ENCODE measurements at regions of chr6 and their contacts with region 1.

Region 1: DNA sequence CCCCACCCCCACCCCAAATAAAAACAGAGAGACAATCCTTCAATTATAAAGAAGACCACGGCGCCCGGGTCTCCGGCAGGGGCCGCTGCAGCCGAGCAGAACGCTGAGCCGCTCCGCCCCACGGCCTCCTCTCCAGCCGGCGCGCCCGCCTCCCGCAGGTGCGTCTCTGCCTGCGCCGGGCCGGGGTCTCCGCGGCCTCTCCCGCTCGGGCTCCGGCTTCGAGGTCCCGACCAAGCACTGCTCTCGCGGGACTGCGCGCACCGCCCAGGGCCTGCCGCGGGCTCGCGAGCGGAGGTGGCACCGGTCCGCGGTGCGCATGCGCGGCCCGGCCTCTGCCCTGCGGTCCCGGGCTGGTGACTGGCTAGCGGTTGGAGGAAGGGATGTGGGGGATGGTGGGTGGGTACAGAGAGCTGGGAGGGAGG is 241 bp upstream of the SIRT5 start:
- DNase-seq: peak; percentile 91 to 96 (median 94)
- ATAC-seq: peak; percentile 89
- H3K4me3 ChIP-seq: peak overlapping the region; percentile 93
- H3K4me3 Mint-ChIP-seq: peak overlapping the region; percentile 88 to 99 (median 95)
- H3K27ac ChIP-seq: peak overlapping the region; percentile 80
- H3K27ac Mint-ChIP-seq: peak overlapping the region; percentile 88 to 99 (median 95)
- H3K4me1 ChIP-seq: peaks cover 5 to 13% of the 10 kb centered on the region in 2 donors
- H3K4me1 Mint-ChIP-seq: peaks cover 10 to 44% (median 28%) of the 10 kb centered on the region in 7 donors
- H3K27me3 ChIP-seq: no peaks in the 10 kb centered on the region
- H3K27me3 Mint-ChIP-seq: no peaks in the 10 kb centered on the region

Region 2: GRCh38 chr6:13203145-13203544 is 371.0 kb before region 1 on chr6:
- CTCF ChIA-PET with region 1: no interaction called
- POLR2A ChIA-PET with region 1: no interaction called
- intact Hi-C with region 1: no loop called
- DNase-seq: no peak
- ATAC-seq: peak; percentile 22
- H3K4me3 ChIP-seq: no peak overlapping the region
- H3K4me3 Mint-ChIP-seq: no peak overlapping the region
- H3K27ac ChIP-seq: no peak overlapping the region
- H3K27ac Mint-ChIP-seq: no peak overlapping the region
- H3K4me1 ChIP-seq: no peaks in the 10 kb centered on the region
- H3K4me1 Mint-ChIP-seq: peaks cover 0 to 2% (median 0%) of the 10 kb centered on the region in 7 donors
- H3K27me3 ChIP-seq: no peaks in the 10 kb centered on the region
- H3K27me3 Mint-ChIP-seq: peaks cover 0 to 2% (median 0%) of the 10 kb centered on the region in 5 donors

Region 3: DNA sequence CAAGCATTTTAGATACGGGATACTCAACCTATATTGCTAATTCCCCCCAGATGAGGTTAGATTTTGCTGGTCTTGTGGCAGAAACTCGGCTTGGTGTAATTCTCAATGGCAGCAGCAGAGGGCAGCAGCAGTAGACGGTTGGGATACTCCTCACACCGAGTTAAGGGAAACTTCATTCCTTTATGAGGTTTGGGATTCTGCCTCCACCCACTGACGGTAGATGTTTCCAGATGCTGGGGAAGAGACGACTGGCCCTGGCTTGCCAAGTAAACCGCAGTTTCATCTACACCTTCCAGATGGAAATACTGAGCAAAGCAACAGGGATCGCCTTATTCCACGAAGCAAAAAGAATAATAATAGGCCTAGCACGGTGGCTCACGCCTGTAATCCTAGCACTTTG is 237.6 kb before region 1 on chr6:
- CTCF ChIA-PET with region 1: interaction called, 4 read pairs
- POLR2A ChIA-PET with region 1: interaction called, 4 read pairs
- intact Hi-C with region 1: loop called (anchors 1 kb)
- DNase-seq: peak; percentile 39 to 80 (median 60)
- ATAC-seq: peak; percentile 83
- H3K4me3 ChIP-seq: no peak overlapping the region
- H3K4me3 Mint-ChIP-seq: peak overlapping the region in 1 of 10 donors; percentile 14
- H3K27ac ChIP-seq: no peak overlapping the region
- H3K27ac Mint-ChIP-seq: no peak overlapping the region
- H3K4me1 ChIP-seq: no peaks in the 10 kb centered on the region
- H3K4me1 Mint-ChIP-seq: peaks cover 3 to 42% (median 8%) of the 10 kb centered on the region in 7 donors
- H3K27me3 ChIP-seq: no peaks in the 10 kb centered on the region
- H3K27me3 Mint-ChIP-seq: peaks cover 0 to 2% (median 0%) of the 10 kb centered on the region in 5 donors

Region 4: DNA sequence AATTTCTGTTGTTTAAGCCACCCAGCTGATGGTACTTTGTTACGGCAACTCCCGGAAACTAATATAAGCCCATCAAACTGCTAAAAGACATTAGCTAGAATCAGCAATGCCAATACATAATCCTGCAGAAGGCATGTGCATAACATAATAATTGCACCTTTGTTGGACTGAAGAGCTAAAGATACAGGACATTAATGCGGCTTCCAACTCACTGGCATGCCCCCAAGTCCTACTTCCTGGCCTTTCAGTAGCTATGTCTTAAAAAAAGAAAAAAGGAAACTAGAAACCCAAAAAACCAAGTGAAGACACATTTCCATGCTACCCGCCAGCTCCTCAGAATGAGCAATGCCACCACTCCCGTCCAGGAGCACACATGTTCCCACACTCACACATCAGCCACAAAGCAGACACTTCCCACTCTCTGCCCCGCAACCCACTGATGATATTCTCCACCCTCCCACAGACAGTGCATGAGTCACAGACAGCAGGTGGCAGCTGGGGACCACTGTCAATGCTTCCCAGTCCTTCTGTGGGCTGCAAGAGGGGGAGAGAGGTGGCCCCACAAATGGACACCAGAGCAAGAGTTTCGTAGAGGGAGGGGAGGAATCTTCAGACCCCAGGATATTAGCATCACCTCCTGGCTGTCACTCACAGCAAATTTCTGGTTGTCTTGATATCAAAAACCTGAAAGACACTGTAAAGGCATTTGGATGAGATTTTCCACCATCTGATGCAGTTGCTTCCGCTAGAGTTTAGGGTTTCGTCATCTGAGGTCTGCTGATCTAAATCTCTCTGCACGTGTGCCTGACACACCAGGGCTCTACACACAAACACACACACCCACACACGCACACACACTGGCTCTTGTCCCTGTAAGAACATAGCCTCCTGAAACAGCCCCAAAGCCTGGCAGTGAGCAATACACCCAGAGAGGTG is 119.6 kb before region 1 on chr6:
- CTCF ChIA-PET with region 1: interaction called, 3 read pairs
- POLR2A ChIA-PET with region 1: interaction called, 3 read pairs
- intact Hi-C with region 1: loop called (anchors 1 to 10 kb)
- DNase-seq: peak; percentile 27 to 83 (median 59)
- ATAC-seq: peak; percentile 88
- H3K4me3 ChIP-seq: peak overlapping the region; percentile 21
- H3K4me3 Mint-ChIP-seq: peak overlapping the region; percentile 63 to 85 (median 74)
- H3K27ac ChIP-seq: peak overlapping the region; percentile 16
- H3K27ac Mint-ChIP-seq: peak overlapping the region; percentile 66 to 93 (median 84)
- H3K4me1 ChIP-seq: peaks cover 17 to 23% of the 10 kb centered on the region in 2 donors
- H3K4me1 Mint-ChIP-seq: peaks cover 15 to 58% (median 28%) of the 10 kb centered on the region in 7 donors
- H3K27me3 ChIP-seq: no peaks in the 10 kb centered on the region
- H3K27me3 Mint-ChIP-seq: no peaks in the 10 kb centered on the region

Region 5: DNA sequence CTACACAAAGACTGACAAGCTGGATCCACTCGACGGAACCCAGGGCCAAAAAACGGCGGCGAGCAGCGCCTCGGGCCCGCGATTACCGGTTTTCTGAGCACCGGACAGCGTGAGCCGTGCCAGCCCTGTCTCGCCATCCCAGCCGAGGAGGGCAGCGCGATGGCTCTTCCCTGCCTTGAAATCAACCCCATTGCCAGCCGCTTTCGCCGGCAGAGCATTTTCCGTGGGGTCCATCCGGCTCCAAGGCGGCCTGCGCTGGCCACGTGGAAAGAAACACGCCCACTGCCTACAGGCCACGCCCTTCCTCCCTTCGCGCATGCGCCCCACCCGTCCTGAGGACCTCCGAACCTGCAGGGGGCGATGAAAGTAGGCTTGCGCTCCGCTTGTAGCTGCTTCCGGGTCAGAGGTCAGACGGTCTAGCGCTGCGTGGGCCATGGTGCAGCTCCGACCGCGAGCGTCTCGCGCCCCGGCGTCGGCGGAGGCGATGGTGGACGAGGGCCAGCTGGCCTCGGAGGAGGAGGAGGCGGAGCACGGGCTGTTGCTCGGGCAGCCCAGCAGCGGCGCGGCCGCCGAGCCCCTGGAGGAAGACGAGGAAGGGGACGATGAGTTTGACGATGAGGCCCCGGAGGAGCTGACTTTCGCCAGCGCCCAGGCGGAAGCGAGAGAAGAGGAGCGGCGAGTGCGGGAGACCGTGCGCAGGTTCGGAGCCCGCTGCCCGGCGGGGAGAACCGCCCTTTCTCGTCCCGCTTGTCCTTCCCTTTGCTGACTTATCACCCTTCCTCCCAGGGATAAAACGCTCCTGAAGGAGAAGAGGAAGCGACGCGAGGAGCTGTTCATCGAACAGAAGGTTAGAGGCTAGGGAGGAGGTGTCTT is 41.0 kb after region 1 on chr6 and contains the start of gene NOL7:
- CTCF ChIA-PET with region 1: interaction called, 26 read pairs
- POLR2A ChIA-PET with region 1: interaction called, 74 read pairs
- intact Hi-C with region 1: loop called (anchors 1 kb)
- DNase-seq: peak; percentile 96 to 99 (median 98)
- ATAC-seq: peak; percentile 98
- H3K4me3 ChIP-seq: peak within 1 kb of the TSS; percentile 85
- H3K4me3 Mint-ChIP-seq: peak within 1 kb of the TSS; percentile 82 to 98 (median 94)
- H3K27ac ChIP-seq: peak within 1 kb of the TSS; percentile 81
- H3K27ac Mint-ChIP-seq: peak within 1 kb of the TSS; percentile 85 to 97 (median 94)
- H3K4me1 ChIP-seq: peaks cover 8 to 26% of the 10 kb centered on the region in 2 donors
- H3K4me1 Mint-ChIP-seq: peaks cover 25 to 55% (median 47%) of the 10 kb centered on the region in 7 donors
- H3K27me3 ChIP-seq: no peaks in the 10 kb centered on the region
- H3K27me3 Mint-ChIP-seq: peaks cover 0 to 2% (median 0%) of the 10 kb centered on the region in 5 donors
- total RNA-seq, gene NOL7: 49.1 to 65.2 (median 62.1) TPM

Region 6: GRCh38 chr6:13668291-13668928 is 94.2 kb after region 1 on chr6:
- CTCF ChIA-PET with region 1: no interaction called
- POLR2A ChIA-PET with region 1: no interaction called
- intact Hi-C with region 1: no loop called
- DNase-seq: no peak
- ATAC-seq: peak; percentile 47
- H3K4me3 ChIP-seq: no peak overlapping the region
- H3K4me3 Mint-ChIP-seq: peak overlapping the region in 7 of 10 donors; percentile 32 to 52 (median 40)
- H3K27ac ChIP-seq: no peak overlapping the region
- H3K27ac Mint-ChIP-seq: peak overlapping the region in 2 of 9 donors; percentile 20 to 75
- H3K4me1 ChIP-seq: peaks cover 23 to 44% of the 10 kb centered on the region in 2 donors
- H3K4me1 Mint-ChIP-seq: peaks cover 67 to 93% (median 90%) of the 10 kb centered on the region in 7 donors
- H3K27me3 ChIP-seq: no peaks in the 10 kb centered on the region
- H3K27me3 Mint-ChIP-seq: no peaks in the 10 kb centered on the region

Region 7: DNA sequence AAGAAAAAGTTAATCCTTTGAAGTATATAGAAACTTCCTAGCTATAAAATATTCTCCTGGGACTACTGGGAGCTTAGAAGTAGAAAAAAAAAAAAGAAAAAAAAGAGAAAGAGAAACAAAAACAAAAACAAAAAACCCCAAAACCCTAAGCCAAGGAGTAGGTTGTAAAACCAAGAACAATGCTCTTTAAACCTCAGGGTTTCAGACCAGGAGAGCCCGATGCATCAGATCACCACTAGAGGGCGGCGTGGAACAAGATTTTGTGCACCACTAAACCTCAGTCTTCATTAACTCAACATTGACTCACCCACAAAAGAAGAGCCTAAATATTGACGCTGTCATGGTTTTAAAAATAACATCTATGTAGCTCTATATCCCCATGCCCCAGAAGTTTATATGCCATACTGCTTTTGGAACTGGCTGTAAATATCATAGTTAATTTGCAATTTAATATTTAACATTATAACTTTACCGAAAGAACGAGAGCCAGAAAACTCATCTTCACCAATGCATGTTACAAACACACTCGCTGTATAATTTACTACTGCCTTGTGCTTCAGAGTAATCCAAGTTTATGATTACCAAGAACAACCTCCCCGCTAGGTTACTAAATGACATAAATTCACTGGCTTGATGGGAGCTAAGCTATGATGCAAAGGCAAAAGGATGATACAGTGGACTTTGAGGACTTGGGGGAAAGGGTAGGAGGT is 221.0 kb after region 1 on chr6:
- CTCF ChIA-PET with region 1: interaction called, 3 read pairs
- POLR2A ChIA-PET with region 1: no interaction called
- intact Hi-C with region 1: loop called (anchors 1 to 2 kb)
- DNase-seq: peak; percentile 54 to 80 (median 77)
- ATAC-seq: peak; percentile 98
- H3K4me3 ChIP-seq: no peak overlapping the region
- H3K4me3 Mint-ChIP-seq: no peak overlapping the region
- H3K27ac ChIP-seq: no peak overlapping the region
- H3K27ac Mint-ChIP-seq: peak overlapping the region in 5 of 9 donors; percentile 7 to 50 (median 27)
- H3K4me1 ChIP-seq: no peaks in the 10 kb centered on the region
- H3K4me1 Mint-ChIP-seq: peaks cover 5 to 16% (median 6%) of the 10 kb centered on the region in 7 donors
- H3K27me3 ChIP-seq: no peaks in the 10 kb centered on the region
- H3K27me3 Mint-ChIP-seq: no peaks in the 10 kb centered on the region

Region 8: GRCh38 chr6:14066782-14067406 is 492.7 kb after region 1 on chr6:
- CTCF ChIA-PET with region 1: interaction called, 3 read pairs
- POLR2A ChIA-PET with region 1: no interaction called
- intact Hi-C with region 1: loop called (anchors 1 to 10 kb)
- DNase-seq: peak in 7 of 9 donors; percentile 32 to 56 (median 43)
- ATAC-seq: peak; percentile 90
- H3K4me3 ChIP-seq: no peak overlapping the region
- H3K4me3 Mint-ChIP-seq: no peak overlapping the region
- H3K27ac ChIP-seq: no peak overlapping the region
- H3K27ac Mint-ChIP-seq: peak overlapping the region in 1 of 9 donors; percentile 82
- H3K4me1 ChIP-seq: no peaks in the 10 kb centered on the region
- H3K4me1 Mint-ChIP-seq: peaks cover 0 to 21% (median 0%) of the 10 kb centered on the region in 7 donors
- H3K27me3 ChIP-seq: no peaks in the 10 kb centered on the region
- H3K27me3 Mint-ChIP-seq: peaks cover 0 to 18% (median 14%) of the 10 kb centered on the region in 5 donors

Measured in naive thymus-derived CD4-positive, alpha-beta T cell (primary cell).